PC-9 (cell line): ENCODE measurements at regions of chr20 and their contacts with region 1.

Region 1: GRCh38 chr20:33925867-33926266 is 67.8 kb upstream of the RALY start:
- DNase-seq: no peak
- H3K4me3 ChIP-seq: no peak overlapping the region
- H3K27ac ChIP-seq: no peak overlapping the region
- H3K4me1 ChIP-seq: no peaks in the 10 kb centered on the region
- H3K27me3 ChIP-seq: no peaks in the 10 kb centered on the region
- CTCF ChIP-seq: no peak

Region 2: GRCh38 chr20:34004227-34004626 is 78.4 kb after region 1 on chr20:
- CTCF ChIA-PET with region 1: no interaction called
- POLR2A ChIA-PET with region 1: interaction called, 19 read pairs
- intact Hi-C with region 1: no loop called
- DNase-seq: no peak
- H3K4me3 ChIP-seq: no peak overlapping the region
- H3K27ac ChIP-seq: no peak overlapping the region
- H3K4me1 ChIP-seq: no peaks in the 10 kb centered on the region
- H3K27me3 ChIP-seq: no peaks in the 10 kb centered on the region
- CTCF ChIP-seq: no peak